ENCODE measurements at regions of chr1 and their contacts with region 1.

Region 1: DNA sequence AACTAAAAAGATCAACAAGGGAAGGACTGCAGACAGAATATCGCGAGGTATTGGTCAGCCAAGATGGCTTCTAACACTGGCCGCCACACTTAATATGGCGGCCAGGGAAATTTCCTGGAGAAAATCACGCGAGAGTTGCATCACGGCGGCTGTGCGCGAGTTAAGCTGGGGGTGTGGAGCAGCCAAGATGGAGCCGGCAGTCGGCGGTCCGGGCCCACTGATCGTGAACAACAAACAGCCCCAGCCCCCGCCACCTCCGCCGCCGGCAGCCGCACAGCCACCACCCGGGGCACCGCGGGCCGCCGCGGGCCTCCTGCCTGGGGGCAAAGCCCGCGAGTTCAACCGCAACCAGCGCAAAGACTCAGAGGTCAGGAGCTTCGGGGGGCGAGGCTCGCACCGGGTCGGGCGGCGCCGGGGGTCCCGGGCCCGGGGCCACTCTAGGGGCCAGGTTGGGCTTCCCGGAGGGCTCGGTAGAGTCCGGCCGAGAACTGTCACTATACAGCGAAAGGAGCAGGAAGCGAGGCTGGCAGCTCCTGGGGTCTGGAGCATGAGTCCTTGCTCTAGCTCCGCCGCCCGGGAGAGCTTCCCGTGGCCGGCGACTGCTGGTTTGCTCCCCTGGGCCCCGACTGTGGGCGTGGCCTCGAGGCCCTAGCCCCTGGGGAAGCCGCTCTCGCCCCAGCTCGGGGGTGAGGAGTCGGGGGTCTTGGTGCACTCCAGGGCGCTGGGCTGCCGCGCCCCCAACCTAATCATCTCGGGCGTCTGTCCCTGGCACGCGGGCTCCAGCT is at the start of gene STRIP1:
- DNase-seq: peak; percentile 98
- ATAC-seq: peak; percentile 90
- H3K4me3 ChIP-seq: peak within 1 kb of the TSS; percentile 67
- H3K27ac ChIP-seq: peak within 1 kb of the TSS; percentile 58
- H3K4me1 ChIP-seq: peaks cover 2% of the 10 kb centered on the region; the same call in 1 of the 2 replicates
- H3K27me3 ChIP-seq: no peaks in the 10 kb centered on the region
- CTCF ChIP-seq: no peak
- POLR2A ChIP-seq: peak; percentile 67
- RAD21 ChIP-seq: no peak
- total RNA-seq, gene STRIP1: 31.4 and 33.5 TPM in 2 replicates

Region 2: DNA sequence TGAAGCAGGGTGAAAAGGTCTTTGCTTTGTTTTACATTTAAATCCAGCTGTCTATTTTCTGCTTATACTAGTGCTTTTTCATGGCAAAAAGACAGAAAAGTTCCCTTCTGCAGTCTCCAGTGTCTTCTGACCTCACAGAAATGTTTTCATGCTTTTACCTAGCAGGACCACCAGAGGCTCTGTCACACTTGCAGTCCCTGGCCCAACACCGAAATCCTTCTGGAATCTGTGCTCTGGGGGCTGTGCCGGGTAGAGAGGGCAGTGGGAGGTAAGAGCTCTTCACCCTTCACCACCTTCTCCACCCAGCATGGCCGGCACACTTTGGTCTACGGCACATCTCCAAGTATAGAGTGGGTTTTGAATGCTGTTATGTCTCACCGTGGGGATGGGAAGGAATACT is 436.0 kb before region 1 on chr1:
- CTCF ChIA-PET with region 1: no interaction called
- POLR2A ChIA-PET with region 1: interaction called, 12 read pairs
- dilution Hi-C with region 1: no loop called
- in situ Hi-C with region 1: no loop called
- intact Hi-C with region 1: no loop called
- DNase-seq: no peak
- ATAC-seq: no peak
- H3K4me3 ChIP-seq: no peak overlapping the region
- H3K27ac ChIP-seq: no peak overlapping the region
- H3K4me1 ChIP-seq: peaks cover 8% of the 10 kb centered on the region
- H3K27me3 ChIP-seq: no peaks in the 10 kb centered on the region
- CTCF ChIP-seq: no peak
- POLR2A ChIP-seq: no peak
- RAD21 ChIP-seq: no peak

Region 3: DNA sequence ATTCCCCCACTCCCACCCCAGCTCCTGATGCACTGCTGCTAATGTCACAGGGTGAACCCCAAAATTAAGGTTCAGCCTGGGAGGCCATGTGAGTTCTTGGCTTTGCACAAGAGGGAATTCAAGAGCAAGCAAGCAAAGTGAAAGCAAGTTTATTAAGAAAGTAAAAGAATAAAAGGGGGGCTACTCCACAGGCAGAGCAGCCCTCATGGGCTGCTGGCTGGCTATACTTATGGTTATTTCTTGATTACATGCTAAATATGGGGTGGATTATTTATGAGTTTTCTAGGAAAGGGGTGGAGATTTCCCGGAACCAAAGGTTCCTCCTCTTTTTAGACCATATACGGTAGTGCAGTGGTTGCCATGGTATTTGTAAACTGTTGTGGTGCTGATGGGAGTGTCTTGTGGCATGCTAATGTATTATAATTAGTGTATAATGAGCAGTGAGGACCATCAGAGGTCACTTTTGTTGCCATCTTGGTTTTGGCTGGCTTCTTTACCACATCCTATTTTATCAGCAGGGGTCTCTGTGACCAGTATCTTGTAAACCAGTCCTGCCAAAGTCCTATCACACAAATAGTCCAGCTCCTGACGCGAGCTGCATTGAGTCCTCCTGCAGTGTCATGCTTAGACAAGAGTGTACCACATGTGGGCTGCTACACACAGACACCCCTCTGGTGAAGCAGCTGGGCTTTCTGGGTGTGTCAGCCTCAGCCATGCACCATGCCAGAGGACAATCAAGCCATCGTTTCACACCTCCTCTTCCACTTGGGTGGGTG is 170.4 kb before region 1 on chr1:
- CTCF ChIA-PET with region 1: no interaction called
- POLR2A ChIA-PET with region 1: no interaction called
- dilution Hi-C with region 1: no loop called
- in situ Hi-C with region 1: no loop called
- intact Hi-C with region 1: no loop called
- DNase-seq: peak; percentile 28
- ATAC-seq: peak; percentile 69
- H3K4me3 ChIP-seq: no peak overlapping the region; the same call in 1 of the 2 replicates
- H3K27ac ChIP-seq: peak overlapping the region; percentile 53; the same call in 1 of the 2 replicates
- H3K4me1 ChIP-seq: peaks cover 10% of the 10 kb centered on the region
- H3K27me3 ChIP-seq: no peaks in the 10 kb centered on the region
- CTCF ChIP-seq: no peak
- POLR2A ChIP-seq: no peak
- RAD21 ChIP-seq: no peak

Region 4: DNA sequence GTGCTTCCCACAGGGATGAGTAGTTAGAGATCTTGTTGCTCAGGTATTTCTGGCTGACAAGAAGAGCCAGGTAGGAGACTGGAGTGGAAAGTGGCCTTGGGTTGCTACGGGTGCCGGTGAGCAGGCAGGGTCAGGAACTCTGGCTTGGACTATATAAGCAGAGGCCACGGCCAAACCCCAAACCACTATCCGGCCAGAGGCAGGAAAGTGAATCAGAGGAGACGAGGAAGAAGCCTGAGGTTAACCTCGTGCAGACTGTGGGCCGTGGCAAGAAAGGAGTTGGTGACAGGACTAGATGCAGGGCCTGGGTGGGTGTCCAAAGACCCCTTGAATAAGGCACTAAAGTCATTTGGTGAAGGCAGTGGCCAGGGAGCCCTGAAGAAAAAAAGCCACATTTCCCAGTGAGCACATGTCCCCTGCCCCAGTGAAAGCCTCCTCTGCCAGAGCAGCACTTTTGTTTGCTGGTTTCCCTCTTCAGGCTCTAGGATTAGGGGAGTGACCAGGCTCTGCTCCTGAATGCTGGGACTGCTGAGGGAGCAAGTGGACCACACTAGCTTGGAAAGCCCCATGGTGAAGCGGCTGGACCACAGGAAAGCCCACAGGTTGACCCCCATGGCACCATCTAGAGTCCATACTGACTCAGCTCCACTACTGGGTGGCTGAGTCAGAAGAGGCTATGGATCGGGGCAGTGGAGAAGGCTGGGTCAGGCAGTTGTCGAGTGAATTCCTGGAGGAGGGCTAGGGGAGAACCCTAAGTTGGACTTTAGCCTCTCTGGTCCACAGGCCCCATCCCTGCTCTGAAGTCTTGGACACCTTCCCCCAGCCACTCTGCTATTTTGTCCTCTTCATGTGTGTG is 100.6 kb before region 1 on chr1:
- CTCF ChIA-PET with region 1: no interaction called
- POLR2A ChIA-PET with region 1: no interaction called
- dilution Hi-C with region 1: no loop called
- in situ Hi-C with region 1: no loop called
- intact Hi-C with region 1: no loop called
- DNase-seq: peak; percentile 96
- ATAC-seq: peak; percentile 74
- H3K4me3 ChIP-seq: no peak overlapping the region
- H3K27ac ChIP-seq: no peak overlapping the region
- H3K4me1 ChIP-seq: peaks cover 9% of the 10 kb centered on the region
- H3K27me3 ChIP-seq: no peaks in the 10 kb centered on the region
- CTCF ChIP-seq: 0 out of 2 replicates have a peak, but pooled peaks have one; percentile 16
- POLR2A ChIP-seq: no peak
- RAD21 ChIP-seq: 0 out of 2 replicates have a peak, but pooled peaks have one; percentile 27

Region 5: GRCh38 chr1:110106013-110106941 is 71.6 kb after region 1 on chr1:
- CTCF ChIA-PET with region 1: interaction called, 3 read pairs
- POLR2A ChIA-PET with region 1: no interaction called
- dilution Hi-C with region 1: no loop called
- in situ Hi-C with region 1: no loop called
- intact Hi-C with region 1: loop called (anchors 1 kb)
- DNase-seq: peak; percentile 69
- ATAC-seq: peak; percentile 98
- H3K4me3 ChIP-seq: no peak overlapping the region
- H3K27ac ChIP-seq: no peak overlapping the region
- H3K4me1 ChIP-seq: no peaks in the 10 kb centered on the region; the same call in 1 of the 2 replicates
- H3K27me3 ChIP-seq: peaks cover 46% of the 10 kb centered on the region
- CTCF ChIP-seq: peak; percentile 94
- POLR2A ChIP-seq: no peak
- RAD21 ChIP-seq: peak; percentile 92